B cell (primary cell): ENCODE measurements at regions of chr3 and their contacts with region 1.

Region 1: DNA sequence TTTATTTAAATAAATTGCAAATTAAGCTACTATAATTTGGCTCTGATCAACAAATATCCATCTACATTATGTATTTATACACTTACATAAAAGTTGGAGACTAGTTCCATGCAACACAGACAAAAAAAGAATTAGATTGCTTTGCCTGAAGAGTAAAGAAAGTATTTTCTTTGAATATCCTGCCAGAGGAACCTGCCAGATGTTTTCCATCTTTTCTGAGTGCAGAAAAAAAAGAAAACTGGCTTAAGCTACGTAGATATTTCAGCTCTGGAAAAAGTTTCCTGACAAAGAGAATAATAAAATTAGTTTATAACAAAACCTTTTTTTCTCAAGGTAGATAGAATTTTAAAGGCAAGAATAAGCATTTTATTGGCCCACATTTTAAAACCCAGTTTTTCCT is 607.5 kb upstream of the NAALADL2 start:
- DNase-seq: no peak
- ATAC-seq: no peak
- H3K4me3 ChIP-seq: no peak overlapping the region
- H3K4me3 Mint-ChIP-seq: no peak overlapping the region
- H3K27ac ChIP-seq: no peak overlapping the region
- H3K27ac Mint-ChIP-seq: no peak overlapping the region
- H3K4me1 ChIP-seq: no peaks in the 10 kb centered on the region
- H3K4me1 Mint-ChIP-seq: no peaks in the 10 kb centered on the region
- H3K27me3 ChIP-seq: no peaks in the 10 kb centered on the region
- H3K27me3 Mint-ChIP-seq: no peaks in the 10 kb centered on the region
- CTCF ChIP-seq: no peak

Region 2: GRCh38 chr3:174218016-174218415 is 33.7 kb before region 1 on chr3:
- CTCF ChIA-PET with region 1: no interaction called
- POLR2A ChIA-PET with region 1: no interaction called
- intact Hi-C with region 1: loop called (anchors 1 kb)
- DNase-seq: no peak
- ATAC-seq: no peak
- H3K4me3 ChIP-seq: no peak overlapping the region
- H3K4me3 Mint-ChIP-seq: no peak overlapping the region
- H3K27ac ChIP-seq: no peak overlapping the region
- H3K27ac Mint-ChIP-seq: no peak overlapping the region
- H3K4me1 ChIP-seq: no peaks in the 10 kb centered on the region
- H3K4me1 Mint-ChIP-seq: no peaks in the 10 kb centered on the region
- H3K27me3 ChIP-seq: no peaks in the 10 kb centered on the region
- H3K27me3 Mint-ChIP-seq: no peaks in the 10 kb centered on the region
- CTCF ChIP-seq: no peak